T-cell (primary cell): ENCODE measurements at regions of chr16 and their contacts with region 1.

Region 1: GRCh38 chr16:234468-235305 is at the start of gene FAM234A:
- DNase-seq: peak; percentile 88 to 98 (median 93)
- ATAC-seq: peak; percentile 88 to 90 (median 89)
- H3K4me3 ChIP-seq: peak within 1 kb of the TSS; percentile 63 to 96
- H3K4me3 Mint-ChIP-seq: peak within 1 kb of the TSS; percentile 82 to 97 (median 86)
- H3K27ac ChIP-seq: peak within 1 kb of the TSS; percentile 96
- H3K27ac Mint-ChIP-seq: peak within 1 kb of the TSS; percentile 94 to 95
- H3K4me1 ChIP-seq: peaks cover 2 to 20% of the 10 kb centered on the region in 2 experiments
- H3K4me1 Mint-ChIP-seq: peaks cover 12 to 18% (median 12%) of the 10 kb centered on the region in 3 donors
- H3K27me3 ChIP-seq: no peaks in the 10 kb centered on the region
- H3K27me3 Mint-ChIP-seq: no peaks in the 10 kb centered on the region
- total RNA-seq, gene FAM234A: 31.6 to 38.2 (median 36.1) TPM

Region 2: DNA sequence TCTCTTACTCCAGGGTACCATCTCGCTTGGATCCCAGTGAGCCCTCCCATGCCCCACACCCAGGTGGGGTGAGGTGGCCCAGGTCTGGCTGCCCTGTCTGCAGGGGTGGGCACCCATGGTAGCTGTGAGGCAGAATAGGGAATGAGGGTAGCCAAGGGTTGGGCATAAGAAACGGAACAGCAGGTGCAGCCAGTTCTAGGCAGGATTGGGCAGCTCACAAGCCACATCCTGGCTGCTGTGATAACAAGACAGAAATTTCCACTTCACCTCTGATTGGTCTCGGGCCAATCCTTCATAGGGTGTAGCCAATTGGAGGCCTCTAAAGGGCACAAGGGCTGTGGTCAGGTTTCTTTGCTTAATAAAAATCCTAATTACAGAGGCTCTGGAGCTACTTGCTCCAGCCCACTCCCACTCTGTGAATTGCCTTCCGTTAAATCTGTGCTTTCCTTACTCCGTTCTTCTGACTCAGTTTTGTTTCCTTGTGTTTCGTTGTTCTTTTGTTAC is 44.2 kb after region 1 on chr16:
- CTCF ChIA-PET with region 1: no interaction called
- POLR2A ChIA-PET with region 1: no interaction called
- DNase-seq: peak in 27 of 35 experiments; percentile 3 to 64 (median 25)
- ATAC-seq: peak; percentile 53 to 88 (median 67)
- H3K4me3 ChIP-seq: no peak overlapping the region
- H3K4me3 Mint-ChIP-seq: peak overlapping the region in 1 of 3 donors; percentile 55
- H3K27ac ChIP-seq: no peak overlapping the region
- H3K27ac Mint-ChIP-seq: no peak overlapping the region
- H3K4me1 ChIP-seq: peaks cover 0 to 39% of the 10 kb centered on the region in 2 experiments
- H3K4me1 Mint-ChIP-seq: peaks cover 8 to 16% (median 10%) of the 10 kb centered on the region in 3 donors
- H3K27me3 ChIP-seq: peaks cover 0 to 78% of the 10 kb centered on the region in 2 experiments
- H3K27me3 Mint-ChIP-seq: peaks cover 16 to 25% of the 10 kb centered on the region in 2 donors

Region 3: GRCh38 chr16:352547-353403 is 118.1 kb after region 1 on chr16 and contains the start of gene AXIN1:
- CTCF ChIA-PET with region 1: interaction called in 1 of 2 experiments, 14 read pairs
- POLR2A ChIA-PET with region 1: interaction called in 1 of 2 experiments, 3 read pairs
- DNase-seq: peak; percentile 96 to 100 (median 100)
- ATAC-seq: peak; percentile 79 to 85 (median 80)
- H3K4me3 ChIP-seq: peak within 1 kb of the TSS; percentile 54 to 74
- H3K4me3 Mint-ChIP-seq: peak within 1 kb of the TSS; percentile 82 to 86 (median 84)
- H3K27ac ChIP-seq: peak within 1 kb of the TSS; percentile 80
- H3K27ac Mint-ChIP-seq: peak within 1 kb of the TSS; percentile 84 to 96
- H3K4me1 ChIP-seq: peaks cover 21 to 76% of the 10 kb centered on the region in 2 experiments
- H3K4me1 Mint-ChIP-seq: peaks cover 52 to 60% (median 56%) of the 10 kb centered on the region in 3 donors
- H3K27me3 ChIP-seq: no peaks in the 10 kb centered on the region
- H3K27me3 Mint-ChIP-seq: no peaks in the 10 kb centered on the region
- total RNA-seq, gene AXIN1: 38.5 to 58.9 (median 50.4) TPM

Region 4: GRCh38 chr16:1651094-1651973 is 1416.6 kb after region 1 on chr16:
- CTCF ChIA-PET with region 1: no interaction called
- POLR2A ChIA-PET with region 1: interaction called in 1 of 2 experiments, 11 read pairs
- DNase-seq: no peak
- ATAC-seq: no peak
- H3K4me3 ChIP-seq: no peak overlapping the region
- H3K4me3 Mint-ChIP-seq: no peak overlapping the region
- H3K27ac ChIP-seq: no peak overlapping the region
- H3K27ac Mint-ChIP-seq: peak overlapping the region in 1 of 2 donors; percentile 28
- H3K4me1 ChIP-seq: no peaks in the 10 kb centered on the region
- H3K4me1 Mint-ChIP-seq: peaks cover 5 to 16% (median 10%) of the 10 kb centered on the region in 3 donors
- H3K27me3 ChIP-seq: no peaks in the 10 kb centered on the region
- H3K27me3 Mint-ChIP-seq: no peaks in the 10 kb centered on the region